Caco-2 (cell line): ENCODE measurements at regions of chr20 and their contacts with region 1.

Region 1: GRCh38 chr20:58839474-58839874 is 11.2 kb downstream of the GNAS-AS1 start:
- DNase-seq: peak; percentile 85 to 86
- H3K4me3 ChIP-seq: peak overlapping the region; percentile 26
- H3K4me3 Mint-ChIP-seq: peak overlapping the region; percentile 69
- H3K27ac Mint-ChIP-seq: no peak overlapping the region
- H3K4me1 ChIP-seq: no peaks in the 10 kb centered on the region
- H3K4me1 Mint-ChIP-seq: no peaks in the 10 kb centered on the region
- H3K27me3 ChIP-seq: no peaks in the 10 kb centered on the region; the same call in none of the 2 replicates
- H3K27me3 Mint-ChIP-seq: peaks cover 39% of the 10 kb centered on the region
- CTCF ChIP-seq: peak; percentile 94 to 97

Region 2: DNA sequence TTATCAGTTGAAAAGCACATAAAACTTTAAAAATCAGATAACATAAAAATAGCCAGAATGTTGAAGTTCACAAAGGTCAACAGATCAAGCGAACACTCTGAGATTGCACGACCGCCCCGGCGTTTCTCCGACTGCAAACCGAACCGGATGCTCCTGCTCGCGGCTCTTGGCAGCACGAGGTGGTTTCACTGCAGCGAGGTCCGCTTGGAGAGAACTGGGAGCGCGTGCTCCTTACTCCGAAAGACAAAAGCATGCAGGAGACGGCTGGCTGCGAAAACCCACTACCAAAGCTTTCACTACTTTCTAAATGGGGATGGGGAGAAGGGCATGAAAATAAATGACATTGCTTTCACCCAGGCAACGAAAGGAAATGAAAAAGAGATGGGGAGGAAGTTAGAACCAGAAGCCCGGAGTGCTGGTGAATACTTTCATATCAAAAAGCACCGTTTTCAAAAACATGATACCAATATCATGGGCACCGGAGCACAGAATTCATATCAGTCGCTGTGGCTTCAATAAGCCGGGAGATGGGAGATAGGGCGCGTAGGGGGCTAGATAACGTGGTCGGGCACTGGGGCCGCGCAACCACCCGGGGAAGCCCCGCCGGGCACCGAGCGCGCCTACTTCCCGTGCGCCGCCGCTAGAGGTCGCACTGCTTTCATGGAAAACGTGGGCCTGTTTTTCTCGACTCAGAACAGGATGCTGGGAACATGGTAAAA is 602.7 kb before region 1 on chr20:
- CTCF ChIA-PET with region 1: no interaction called
- POLR2A ChIA-PET with region 1: no interaction called
- intact Hi-C with region 1: loop called (anchors 1 kb)
- DNase-seq: peak; percentile 77 to 92
- H3K4me3 ChIP-seq: peak overlapping the region; percentile 40
- H3K4me3 Mint-ChIP-seq: peak overlapping the region; percentile 83
- H3K27ac Mint-ChIP-seq: no peak overlapping the region
- H3K4me1 ChIP-seq: no peaks in the 10 kb centered on the region
- H3K4me1 Mint-ChIP-seq: peaks cover 5% of the 10 kb centered on the region
- H3K27me3 ChIP-seq: peaks cover 5% of the 10 kb centered on the region; the same call in 1 of the 2 replicates
- H3K27me3 Mint-ChIP-seq: peaks cover 33% of the 10 kb centered on the region
- CTCF ChIP-seq: peak; percentile 99 to 100

Region 3: GRCh38 chr20:58471193-58472164 is 368.0 kb before region 1 on chr20:
- CTCF ChIA-PET with region 1: no interaction called
- POLR2A ChIA-PET with region 1: no interaction called
- intact Hi-C with region 1: loop called (anchors 10 kb)
- DNase-seq: peak in 1 of 2 experiments; percentile 51
- H3K4me3 ChIP-seq: no peak overlapping the region
- H3K4me3 Mint-ChIP-seq: no peak overlapping the region
- H3K27ac Mint-ChIP-seq: no peak overlapping the region
- H3K4me1 ChIP-seq: no peaks in the 10 kb centered on the region
- H3K4me1 Mint-ChIP-seq: no peaks in the 10 kb centered on the region
- H3K27me3 ChIP-seq: no peaks in the 10 kb centered on the region
- H3K27me3 Mint-ChIP-seq: no peaks in the 10 kb centered on the region
- CTCF ChIP-seq: peak in 1 of 2 experiments; percentile 29

Region 4: DNA sequence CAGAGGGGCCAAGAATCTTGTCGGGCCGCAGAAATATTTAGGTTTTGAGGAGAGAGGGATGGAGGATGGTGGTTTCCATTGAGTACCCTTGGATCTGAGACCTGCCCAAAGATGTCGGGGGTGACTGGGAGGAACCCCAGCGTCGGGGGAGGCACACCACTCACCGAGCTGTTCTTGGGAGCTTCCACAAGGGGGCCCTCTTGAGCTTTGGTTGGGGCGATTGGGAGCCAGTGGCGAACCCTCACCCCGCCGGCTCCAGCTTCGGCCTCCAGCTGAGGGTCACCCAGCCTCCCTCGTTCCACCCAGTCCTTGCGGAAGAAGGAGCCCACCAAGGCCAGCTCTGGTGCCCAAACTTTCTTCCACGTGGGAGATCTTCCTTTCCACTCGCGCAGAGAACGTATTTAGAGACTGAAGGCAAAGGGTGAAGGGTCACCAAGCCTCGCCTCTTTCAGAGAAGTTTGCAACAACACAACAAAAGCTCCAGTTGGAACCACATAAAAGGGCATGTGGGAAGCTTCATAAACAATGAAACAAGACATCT is 357.9 kb before region 1 on chr20:
- CTCF ChIA-PET with region 1: interaction called, 10 read pairs
- POLR2A ChIA-PET with region 1: no interaction called
- intact Hi-C with region 1: loop called (anchors 10 kb)
- DNase-seq: peak; percentile 60 to 74
- H3K4me3 ChIP-seq: no peak overlapping the region
- H3K4me3 Mint-ChIP-seq: no peak overlapping the region
- H3K27ac Mint-ChIP-seq: no peak overlapping the region
- H3K4me1 ChIP-seq: no peaks in the 10 kb centered on the region
- H3K4me1 Mint-ChIP-seq: no peaks in the 10 kb centered on the region
- H3K27me3 ChIP-seq: no peaks in the 10 kb centered on the region
- H3K27me3 Mint-ChIP-seq: peaks cover 3% of the 10 kb centered on the region
- CTCF ChIP-seq: peak; percentile 26 to 78